ENCODE measurements at regions of chr9 and their contacts with region 1.

Region 1: GRCh38 chr9:27634879-27635278 is 61.6 kb upstream of the C9orf72 start:
- DNase-seq: no peak
- ATAC-seq: no peak
- H3K4me3 ChIP-seq: no peak overlapping the region
- H3K27ac ChIP-seq: no peak overlapping the region
- H3K4me1 ChIP-seq: no peaks in the 10 kb centered on the region
- H3K27me3 ChIP-seq: peaks cover 0 to 2% (median 0%) of the 10 kb centered on the region in 3 donors
- CTCF ChIP-seq: no peak

Region 2: DNA sequence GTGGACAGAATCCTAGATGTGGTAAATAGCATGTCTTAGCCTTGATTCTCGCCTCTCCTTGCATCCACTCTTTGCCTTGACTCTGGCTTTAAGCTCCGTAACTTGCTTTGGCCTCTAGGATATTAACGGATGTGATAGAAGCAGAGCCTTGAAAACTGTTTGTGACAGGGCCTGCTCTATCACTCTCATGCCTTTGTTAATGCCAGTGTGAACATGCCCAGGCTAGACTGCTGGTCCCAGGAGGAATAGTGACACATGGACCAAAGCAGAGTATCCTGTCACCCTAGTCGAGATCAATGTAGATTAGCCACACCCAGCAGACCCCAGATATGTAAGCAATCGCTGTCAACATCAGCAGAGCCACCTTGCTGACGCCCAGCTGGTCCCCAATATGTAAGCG is 48.3 kb after region 1 on chr9:
- intact Hi-C with region 1: loop called in 1 of 2 experiments (anchors 5 kb)
- DNase-seq: no peak
- ATAC-seq: no peak
- H3K4me3 ChIP-seq: no peak overlapping the region
- H3K27ac ChIP-seq: no peak overlapping the region
- H3K4me1 ChIP-seq: no peaks in the 10 kb centered on the region
- H3K27me3 ChIP-seq: no peaks in the 10 kb centered on the region
- CTCF ChIP-seq: no peak